Activated CD4-positive, alpha-beta T cell treated with anti-CD3 and anti-CD28 coated beads, Interleukin-2, amount 10 ng/mL, durations not matched to agents 24 days and 14 days (primary cell): ENCODE measurements at regions of chr6 and their contacts with region 1.

Region 1: DNA sequence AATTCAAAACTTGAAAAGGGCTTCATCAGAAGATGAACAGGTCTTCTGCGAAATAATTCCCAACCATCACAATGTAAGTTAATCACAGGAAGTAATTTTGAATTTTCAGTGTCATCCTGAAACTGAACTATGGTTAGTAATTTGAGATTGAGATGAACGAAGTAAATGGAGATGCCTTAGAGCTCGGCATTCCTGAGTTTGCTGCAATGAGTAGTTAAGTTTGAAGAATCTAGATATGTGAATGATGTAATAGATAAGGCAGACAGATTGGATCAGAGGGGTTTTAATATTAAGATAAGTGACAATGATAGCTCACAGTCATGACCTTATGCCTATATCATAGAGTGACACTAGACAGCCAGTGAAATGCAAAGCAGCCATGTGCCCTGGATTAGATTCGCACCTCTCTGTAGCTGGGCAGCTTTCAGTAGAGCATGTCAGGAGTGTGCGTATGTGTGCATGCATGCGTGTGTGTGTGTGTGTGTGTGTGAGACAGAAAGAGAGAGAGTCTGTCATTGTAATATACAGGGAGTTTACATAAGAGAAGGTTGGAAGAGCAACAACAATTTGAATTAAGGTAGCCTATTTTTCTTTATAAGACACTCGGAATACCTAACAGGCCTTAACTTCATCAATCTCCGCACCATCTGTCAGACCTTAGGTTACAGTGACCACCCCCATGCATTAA is 233.0 kb downstream of the GMPR start:
- DNase-seq: no peak
- H3K4me3 Mint-ChIP-seq: peak overlapping the region; percentile 27
- H3K27ac Mint-ChIP-seq: peak overlapping the region; percentile 82
- H3K4me1 Mint-ChIP-seq: peaks cover 58% of the 10 kb centered on the region
- H3K27me3 Mint-ChIP-seq: no peaks in the 10 kb centered on the region

Region 2: GRCh38 chr6:16437984-16438383 is 33.4 kb before region 1 on chr6:
- intact Hi-C with region 1: loop called (anchors 2 kb)
- DNase-seq: peak; percentile 67
- H3K4me3 Mint-ChIP-seq: peak overlapping the region; percentile 76
- H3K27ac Mint-ChIP-seq: peak overlapping the region; percentile 82
- H3K4me1 Mint-ChIP-seq: peaks cover 56% of the 10 kb centered on the region
- H3K27me3 Mint-ChIP-seq: no peaks in the 10 kb centered on the region

Region 3: GRCh38 chr6:16452348-16452747 is 19.0 kb before region 1 on chr6:
- intact Hi-C with region 1: loop called (anchors 1 kb)
- DNase-seq: no peak
- H3K4me3 Mint-ChIP-seq: no peak overlapping the region
- H3K27ac Mint-ChIP-seq: no peak overlapping the region
- H3K4me1 Mint-ChIP-seq: peaks cover 13% of the 10 kb centered on the region
- H3K27me3 Mint-ChIP-seq: no peaks in the 10 kb centered on the region

Region 4: DNA sequence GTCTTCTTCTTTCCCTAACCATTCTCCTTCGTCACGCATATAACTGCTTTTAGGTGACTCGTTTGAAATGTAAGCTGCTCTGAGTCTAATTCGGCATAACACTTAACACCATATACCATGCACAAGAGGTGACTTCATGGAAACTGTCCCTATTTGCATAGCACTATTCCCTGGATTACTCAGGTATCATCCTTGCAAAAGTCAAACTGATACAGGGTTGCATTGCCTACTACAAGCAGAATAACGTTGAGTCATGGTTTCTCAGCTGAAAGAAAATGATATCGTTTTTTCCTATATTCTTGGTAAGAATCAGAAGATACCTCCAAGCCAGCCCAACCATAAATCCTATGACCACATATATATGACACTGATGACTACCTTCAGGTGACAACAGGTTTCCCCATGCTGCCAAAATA is 62.4 kb after region 1 on chr6:
- intact Hi-C with region 1: loop called (anchors 2 kb)
- DNase-seq: no peak
- H3K4me3 Mint-ChIP-seq: no peak overlapping the region
- H3K27ac Mint-ChIP-seq: peak overlapping the region; percentile 46
- H3K4me1 Mint-ChIP-seq: peaks cover 19% of the 10 kb centered on the region
- H3K27me3 Mint-ChIP-seq: no peaks in the 10 kb centered on the region

Region 5: GRCh38 chr6:16576451-16577368 is 105.3 kb after region 1 on chr6:
- intact Hi-C with region 1: no loop called
- DNase-seq: no peak
- H3K4me3 Mint-ChIP-seq: no peak overlapping the region
- H3K27ac Mint-ChIP-seq: no peak overlapping the region
- H3K4me1 Mint-ChIP-seq: peaks cover 22% of the 10 kb centered on the region
- H3K27me3 Mint-ChIP-seq: no peaks in the 10 kb centered on the region